Activated CD4-positive, alpha-beta memory T cell treated with anti-CD3 and anti-CD28 coated beads, Interleukin-2, amount 10 ng/mL, durations not matched to agents 7 days and 5 days (primary cell): ENCODE measurements at regions of chr19 and their contacts with region 1.

Region 1: DNA sequence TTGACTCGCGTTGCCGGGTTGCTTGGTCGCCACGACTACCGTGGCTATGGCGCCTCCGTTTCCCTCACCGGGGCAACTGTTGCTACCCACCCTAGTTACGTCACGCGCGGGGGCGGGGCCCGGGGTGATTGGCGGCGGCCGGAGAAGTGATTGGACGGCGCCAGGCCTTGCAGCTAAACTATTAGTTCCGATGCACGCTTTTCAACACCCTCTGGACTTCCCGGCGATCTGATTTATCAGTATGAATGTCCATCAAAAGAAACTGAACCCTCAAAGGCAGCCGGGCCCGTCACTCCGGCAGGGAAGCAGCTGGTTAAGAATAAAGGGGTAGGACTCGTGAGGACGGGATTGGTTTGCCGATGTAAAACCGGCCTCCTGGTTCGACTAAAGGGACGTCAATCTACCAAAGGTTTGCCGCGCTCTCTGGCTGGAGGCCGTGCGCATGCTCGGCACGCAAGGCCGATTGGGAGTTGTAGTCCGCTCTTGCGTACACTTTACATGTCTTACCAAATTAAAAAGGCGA is at the start of gene RFX1:
- DNase-seq: peak; percentile 100
- H3K4me3 Mint-ChIP-seq: peak within 1 kb of the TSS; percentile 84
- H3K27ac Mint-ChIP-seq: peak within 1 kb of the TSS; percentile 93
- H3K4me1 Mint-ChIP-seq: peaks cover 41% of the 10 kb centered on the region
- H3K27me3 Mint-ChIP-seq: no peaks in the 10 kb centered on the region
- total RNA-seq, gene RFX1: 16.8 to 18.6 TPM

Region 2: DNA sequence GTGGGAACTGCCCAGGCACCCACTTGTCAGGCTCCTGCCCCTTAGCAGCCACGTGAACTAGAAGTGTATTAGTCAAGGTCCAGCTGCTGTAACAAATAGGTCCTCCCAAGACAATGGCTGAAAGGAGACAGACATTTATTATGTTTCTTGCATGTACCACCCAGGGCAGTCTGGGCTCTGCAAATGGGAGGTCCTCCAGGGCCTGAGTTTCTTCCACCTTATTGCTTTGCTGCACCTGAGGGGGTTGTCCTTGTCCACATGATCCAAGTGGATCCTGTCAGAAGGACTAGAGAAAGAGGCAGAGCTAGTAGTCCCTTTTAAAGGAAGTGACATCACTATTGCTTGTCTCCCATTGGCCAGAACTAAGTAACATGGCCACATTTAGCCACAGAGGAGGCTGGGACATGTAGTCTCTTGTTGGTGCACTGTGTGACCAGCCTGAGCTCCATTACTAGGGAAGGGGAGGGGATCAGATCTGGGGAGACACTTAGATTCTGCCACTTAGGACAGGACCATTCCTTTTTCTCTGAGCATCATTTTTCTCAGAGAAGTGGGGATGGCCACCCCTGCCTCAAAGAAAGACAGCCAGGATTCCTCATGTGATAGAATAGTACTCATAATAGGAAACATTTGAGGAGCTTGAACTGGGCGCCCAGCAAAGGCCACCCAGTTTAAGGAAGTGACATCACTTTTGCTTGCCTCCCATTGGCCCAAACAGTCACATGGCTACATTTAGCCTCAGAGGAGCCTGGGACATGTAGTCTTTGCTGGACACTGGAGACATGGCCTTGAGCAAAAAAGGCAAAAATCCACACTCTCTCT is 85.2 kb before region 1 on chr19:
- CTCF ChIA-PET with region 1: no interaction called
- POLR2A ChIA-PET with region 1: no interaction called
- DNase-seq: peak; percentile 46
- H3K4me3 Mint-ChIP-seq: no peak overlapping the region
- H3K27ac Mint-ChIP-seq: no peak overlapping the region
- H3K4me1 Mint-ChIP-seq: peaks cover 3% of the 10 kb centered on the region
- H3K27me3 Mint-ChIP-seq: no peaks in the 10 kb centered on the region

Region 3: DNA sequence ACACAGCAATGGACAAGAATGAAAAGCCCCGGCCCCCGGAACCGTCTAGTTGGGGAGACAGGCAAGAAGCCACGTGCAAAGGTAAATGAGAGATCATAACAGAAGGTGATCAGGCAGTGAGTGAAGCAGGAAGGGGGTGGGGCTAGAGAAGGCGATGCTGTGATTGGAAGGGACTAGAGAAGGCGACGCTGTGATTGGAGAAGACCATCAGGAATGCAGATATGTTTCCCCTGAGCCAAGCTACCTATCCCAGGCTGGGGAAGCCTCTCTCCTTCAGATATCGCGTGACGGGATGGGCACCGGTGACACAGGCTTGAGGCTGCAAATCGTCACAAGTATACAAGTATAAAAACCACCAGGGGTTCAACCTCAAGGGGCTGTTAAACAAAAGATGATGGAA is 32.2 kb before region 1 on chr19:
- CTCF ChIA-PET with region 1: no interaction called
- POLR2A ChIA-PET with region 1: no interaction called
- DNase-seq: peak; percentile 28
- H3K4me3 Mint-ChIP-seq: no peak overlapping the region
- H3K27ac Mint-ChIP-seq: no peak overlapping the region
- H3K4me1 Mint-ChIP-seq: peaks cover 6% of the 10 kb centered on the region
- H3K27me3 Mint-ChIP-seq: no peaks in the 10 kb centered on the region

Region 4: DNA sequence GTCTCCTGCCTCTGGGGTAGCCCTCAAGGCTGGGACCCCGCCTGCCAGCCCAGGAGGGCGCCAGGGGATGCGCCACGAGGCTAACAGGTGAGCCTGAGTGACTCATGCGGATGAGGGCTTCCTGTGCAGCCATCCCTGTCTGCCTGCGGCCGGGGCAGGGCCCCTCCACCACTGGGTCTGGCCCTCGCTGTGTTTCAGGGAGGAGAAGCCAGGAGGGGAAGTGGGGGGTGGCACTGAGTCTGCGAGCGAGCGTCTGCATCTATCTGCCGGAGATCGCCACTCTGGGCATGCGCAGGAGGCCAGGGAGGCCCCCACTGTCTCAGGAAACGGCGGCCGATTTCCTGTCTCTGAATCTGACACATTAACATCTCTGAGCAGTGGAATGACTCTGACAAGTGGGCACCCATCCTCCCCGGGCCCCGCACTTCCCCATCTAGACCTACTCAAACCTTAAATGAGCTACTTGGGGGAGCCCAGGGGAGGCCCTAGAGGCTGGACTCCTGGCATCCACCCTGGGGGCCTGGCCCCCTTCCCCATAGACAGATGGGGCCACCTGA is 19.9 kb before region 1 on chr19:
- CTCF ChIA-PET with region 1: interaction called, 4 read pairs
- POLR2A ChIA-PET with region 1: interaction called, 157 read pairs
- DNase-seq: peak; percentile 99
- H3K4me3 Mint-ChIP-seq: peak overlapping the region; percentile 59
- H3K27ac Mint-ChIP-seq: peak overlapping the region; percentile 98
- H3K4me1 Mint-ChIP-seq: peaks cover 77% of the 10 kb centered on the region
- H3K27me3 Mint-ChIP-seq: no peaks in the 10 kb centered on the region